ENCODE measurements at regions of chr18 and their contacts with region 1.

Region 1: DNA sequence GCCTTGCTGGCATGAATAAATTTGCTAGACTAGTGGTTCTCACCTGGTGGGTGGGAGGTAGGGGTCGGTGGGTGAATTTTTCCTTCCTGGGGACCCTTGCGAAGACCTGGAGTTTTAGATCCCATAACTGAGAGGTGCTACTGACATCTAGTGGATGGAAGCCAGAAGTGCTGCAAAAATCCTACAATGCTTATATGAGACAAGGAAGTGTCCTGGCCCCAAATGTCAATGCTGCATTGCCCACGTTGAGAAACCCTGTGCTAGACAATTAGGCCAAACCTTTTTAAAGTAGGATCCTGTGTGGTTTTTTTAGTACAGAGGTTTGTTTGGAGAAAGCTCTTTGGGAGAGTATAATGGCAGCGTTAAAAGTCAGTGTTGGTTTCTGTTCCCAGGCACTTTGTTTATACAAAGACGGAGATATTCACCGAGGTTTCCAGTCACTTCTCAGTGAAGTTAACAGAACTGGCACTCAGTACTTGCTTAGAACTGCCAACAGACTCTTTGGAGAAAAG is 9.6 kb downstream of the SERPINB8 start:
- DNase-seq: peak; percentile 35 to 76 (median 68)
- H3K4me3 ChIP-seq: no peak overlapping the region
- H3K4me3 Mint-ChIP-seq: peak overlapping the region in 1 of 2 donors; percentile 67
- H3K27ac ChIP-seq: peak overlapping the region in 1 of 2 donors; percentile 71
- H3K27ac Mint-ChIP-seq: peak overlapping the region; percentile 70 to 93 (median 82)
- H3K4me1 ChIP-seq: peaks cover 76 to 82% of the 10 kb centered on the region in 2 donors
- H3K4me1 Mint-ChIP-seq: peaks cover 78% of the 10 kb centered on the region
- H3K27me3 ChIP-seq: no peaks in the 10 kb centered on the region
- H3K27me3 Mint-ChIP-seq: peaks cover 0 to 2% (median 0%) of the 10 kb centered on the region in 3 donors
- CTCF ChIP-seq: peak; percentile 89

Region 2: GRCh38 chr18:63949068-63949737 is 30.3 kb before region 1 on chr18 and contains the start of gene HMSD:
- intact Hi-C with region 1: no loop called
- DNase-seq: peak in 2 of 3 donors; percentile 60 to 86
- H3K4me3 ChIP-seq: peak within 1 kb of the TSS in 1 of 3 experiments; percentile 51
- H3K4me3 Mint-ChIP-seq: peak within 1 kb of the TSS; percentile 66 to 83
- H3K27ac ChIP-seq: no peak within 1 kb of the TSS
- H3K27ac Mint-ChIP-seq: no peak within 1 kb of the TSS
- H3K4me1 ChIP-seq: peaks cover 9 to 10% of the 10 kb centered on the region in 2 donors
- H3K4me1 Mint-ChIP-seq: peaks cover 18% of the 10 kb centered on the region
- H3K27me3 ChIP-seq: no peaks in the 10 kb centered on the region
- H3K27me3 Mint-ChIP-seq: peaks cover 0 to 4% (median 2%) of the 10 kb centered on the region in 3 donors
- CTCF ChIP-seq: peak; percentile 57
- polyA plus RNA-seq, gene HMSD: not detected

Region 3: DNA sequence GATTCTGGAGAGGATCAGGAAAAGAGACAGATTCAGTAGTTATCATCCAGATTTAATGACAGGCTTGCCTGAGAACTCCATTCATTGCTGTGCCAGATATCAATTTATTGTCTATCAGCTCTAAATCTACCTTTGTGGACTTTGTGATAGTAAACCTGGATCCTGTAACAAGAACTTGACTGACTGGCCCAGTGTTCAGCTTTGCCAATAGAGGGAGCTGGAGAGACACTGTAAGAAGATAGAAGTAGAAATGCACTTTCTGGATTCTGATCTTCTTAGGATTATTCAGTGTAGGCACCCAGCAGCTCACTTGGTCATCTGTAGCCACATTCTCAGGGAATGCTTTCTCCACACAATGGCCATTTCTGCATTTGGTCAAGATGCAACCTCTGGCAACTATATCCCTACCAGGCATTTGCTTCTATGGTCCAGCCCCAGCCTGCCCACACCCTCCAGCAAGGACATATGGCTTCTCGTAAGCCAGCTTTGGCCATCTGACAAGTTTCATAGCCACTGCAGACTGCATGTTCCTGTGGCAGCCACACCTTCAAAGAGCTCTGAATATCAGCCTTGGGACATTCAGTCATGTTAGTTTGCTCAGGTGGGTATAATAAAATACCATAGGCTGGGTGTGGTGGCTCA is 15.7 kb before region 1 on chr18:
- intact Hi-C with region 1: loop called in 1 of 2 experiments (anchors 2 kb)
- DNase-seq: peak; percentile 59 to 76 (median 70)
- H3K4me3 ChIP-seq: no peak overlapping the region
- H3K4me3 Mint-ChIP-seq: no peak overlapping the region
- H3K27ac ChIP-seq: no peak overlapping the region
- H3K27ac Mint-ChIP-seq: peak overlapping the region in 4 of 7 donors; percentile 5 to 70 (median 44)
- H3K4me1 ChIP-seq: peaks cover 40 to 48% of the 10 kb centered on the region in 2 donors
- H3K4me1 Mint-ChIP-seq: peaks cover 52% of the 10 kb centered on the region
- H3K27me3 ChIP-seq: no peaks in the 10 kb centered on the region
- H3K27me3 Mint-ChIP-seq: peaks cover 0 to 5% (median 0%) of the 10 kb centered on the region in 3 donors
- CTCF ChIP-seq: peak; percentile 88